Naive thymus-derived CD4-positive, alpha-beta T cell (primary cell): ENCODE measurements at regions of chr3 and their contacts with region 1.

Region 1: GRCh38 chr3:33063651-33064051 is 33.3 kb downstream of the GLB1 start:
- DNase-seq: peak in 1 of 9 donors; percentile 61
- ATAC-seq: peak; percentile 47
- H3K4me3 ChIP-seq: no peak overlapping the region
- H3K4me3 Mint-ChIP-seq: peak overlapping the region in 9 of 10 donors; percentile 8 to 68 (median 43)
- H3K27ac ChIP-seq: no peak overlapping the region
- H3K27ac Mint-ChIP-seq: peak overlapping the region; percentile 1 to 85 (median 39)
- H3K4me1 ChIP-seq: peaks cover 44 to 55% of the 10 kb centered on the region in 2 donors
- H3K4me1 Mint-ChIP-seq: peaks cover 35 to 55% (median 48%) of the 10 kb centered on the region in 7 donors
- H3K27me3 ChIP-seq: no peaks in the 10 kb centered on the region
- H3K27me3 Mint-ChIP-seq: no peaks in the 10 kb centered on the region

Region 2: GRCh38 chr3:33023172-33024136 is 40.2 kb before region 1 on chr3:
- CTCF ChIA-PET with region 1: interaction called, 5 read pairs
- POLR2A ChIA-PET with region 1: no interaction called
- intact Hi-C with region 1: loop called (anchors 1 kb)
- DNase-seq: peak in 6 of 9 donors; percentile 5 to 34 (median 26)
- ATAC-seq: peak; percentile 76
- H3K4me3 ChIP-seq: no peak overlapping the region
- H3K4me3 Mint-ChIP-seq: peak overlapping the region in 4 of 10 donors; percentile 1 to 37 (median 20)
- H3K27ac ChIP-seq: no peak overlapping the region
- H3K27ac Mint-ChIP-seq: peak overlapping the region in 5 of 9 donors; percentile 13 to 56 (median 44)
- H3K4me1 ChIP-seq: peaks cover 13 to 15% of the 10 kb centered on the region in 2 donors
- H3K4me1 Mint-ChIP-seq: peaks cover 15 to 54% (median 40%) of the 10 kb centered on the region in 7 donors
- H3K27me3 ChIP-seq: no peaks in the 10 kb centered on the region
- H3K27me3 Mint-ChIP-seq: no peaks in the 10 kb centered on the region

Region 3: DNA sequence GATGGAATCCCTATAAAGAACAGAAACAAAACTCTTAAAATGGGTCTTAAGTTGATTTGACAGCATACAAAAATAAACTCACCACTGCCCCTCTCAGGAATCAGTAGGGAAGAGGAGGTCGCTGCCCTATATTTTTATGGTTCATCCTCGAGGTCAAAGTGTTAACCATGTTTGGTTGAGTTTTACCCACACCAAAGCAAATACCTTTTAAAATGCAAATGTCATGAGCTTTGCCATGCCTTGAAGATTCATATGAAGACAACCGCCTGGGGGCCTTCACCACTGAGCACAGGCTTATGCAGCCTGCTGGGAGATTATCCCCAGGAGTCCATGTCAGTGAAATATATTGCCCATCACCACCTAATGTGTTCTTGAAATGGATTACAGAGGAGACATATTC is 32.8 kb before region 1 on chr3:
- CTCF ChIA-PET with region 1: interaction called, 3 read pairs
- POLR2A ChIA-PET with region 1: no interaction called
- intact Hi-C with region 1: loop called in 1 of 2 experiments (anchors 2 kb)
- DNase-seq: no peak
- ATAC-seq: peak; percentile 65
- H3K4me3 ChIP-seq: no peak overlapping the region
- H3K4me3 Mint-ChIP-seq: peak overlapping the region in 1 of 10 donors; percentile 12
- H3K27ac ChIP-seq: no peak overlapping the region
- H3K27ac Mint-ChIP-seq: peak overlapping the region in 2 of 9 donors; percentile 24 to 32
- H3K4me1 ChIP-seq: peaks cover 0 to 11% of the 10 kb centered on the region in 2 donors
- H3K4me1 Mint-ChIP-seq: peaks cover 0 to 27% (median 7%) of the 10 kb centered on the region in 7 donors
- H3K27me3 ChIP-seq: no peaks in the 10 kb centered on the region
- H3K27me3 Mint-ChIP-seq: no peaks in the 10 kb centered on the region